Ascending aorta (tissue), 2 donors: ENCODE measurements at regions of chr15 and their contacts with region 1.

Region 1: GRCh38 chr15:43370975-43371974 is at the starts of genes TUBGCP4 and ZSCAN29:
- DNase-seq: peak in 1 of 2 donors; percentile 88
- H3K4me3 ChIP-seq: peak within 1 kb of the TSS; percentile 83 to 92
- H3K27ac ChIP-seq: peak within 1 kb of the TSS; percentile 44 to 62
- H3K4me1 ChIP-seq: peaks cover 0 to 11% of the 10 kb centered on the region in 2 donors
- H3K27me3 ChIP-seq: no peaks in the 10 kb centered on the region
- CTCF ChIP-seq: peak in 2 of 3 experiments; percentile 15 to 19
- total RNA-seq, gene TUBGCP4: 13.4 TPM
- total RNA-seq, gene ZSCAN29: 7.8 TPM

Region 2: DNA sequence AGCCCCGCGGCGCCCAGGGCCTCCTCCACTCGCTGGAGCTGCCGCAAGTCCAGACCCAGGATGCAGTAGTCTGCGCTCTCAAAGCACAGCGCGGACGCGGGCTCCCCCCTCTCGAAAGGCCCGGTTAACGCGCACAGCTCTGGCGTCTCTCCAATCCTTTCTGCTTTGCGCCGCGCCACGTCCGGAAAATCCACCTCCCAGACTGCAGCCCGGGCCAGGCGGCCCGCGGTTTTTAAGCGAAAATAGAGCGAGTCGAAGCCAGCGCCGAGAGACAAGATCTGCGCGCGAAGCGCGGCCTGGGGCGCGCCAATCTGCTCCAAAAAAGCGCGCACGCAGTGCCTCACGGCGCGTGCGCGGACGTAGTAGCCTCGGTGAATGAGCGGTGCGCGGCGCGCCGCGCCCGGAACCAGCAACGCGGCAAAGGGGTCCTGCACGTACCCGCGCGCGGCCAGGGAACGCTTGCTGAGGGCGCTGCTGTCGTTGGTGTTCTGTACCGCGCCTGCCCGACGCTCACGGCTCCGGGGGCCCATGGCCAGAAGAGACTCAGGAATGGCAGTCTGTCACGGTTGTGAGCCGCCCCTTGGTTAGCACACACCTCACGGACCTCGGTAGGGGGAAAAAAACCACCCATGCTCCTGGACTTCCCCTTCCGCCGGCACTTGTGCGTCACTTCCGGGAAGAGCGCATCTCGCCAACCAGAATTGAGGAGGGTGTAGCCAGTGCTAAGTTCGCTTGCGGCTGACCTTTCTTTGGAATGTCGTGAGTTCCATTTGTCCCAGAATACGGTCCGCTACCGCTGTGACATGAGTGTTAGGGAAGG is 41.1 kb before region 1 on chr15 and contains the start of gene LCMT2:
- intact Hi-C with region 1: loop called (anchors 2 kb)
- DNase-seq: peak; percentile 67 to 96
- H3K4me3 ChIP-seq: peak within 1 kb of the TSS; percentile 70 to 86
- H3K27ac ChIP-seq: peak within 1 kb of the TSS; percentile 93 to 94
- H3K4me1 ChIP-seq: peaks cover 14 to 23% of the 10 kb centered on the region in 2 donors
- H3K27me3 ChIP-seq: no peaks in the 10 kb centered on the region
- CTCF ChIP-seq: no peak
- total RNA-seq, gene LCMT2: 1.2 TPM